ENCODE measurements at regions of chr12 and their contacts with region 1.

Region 1: DNA sequence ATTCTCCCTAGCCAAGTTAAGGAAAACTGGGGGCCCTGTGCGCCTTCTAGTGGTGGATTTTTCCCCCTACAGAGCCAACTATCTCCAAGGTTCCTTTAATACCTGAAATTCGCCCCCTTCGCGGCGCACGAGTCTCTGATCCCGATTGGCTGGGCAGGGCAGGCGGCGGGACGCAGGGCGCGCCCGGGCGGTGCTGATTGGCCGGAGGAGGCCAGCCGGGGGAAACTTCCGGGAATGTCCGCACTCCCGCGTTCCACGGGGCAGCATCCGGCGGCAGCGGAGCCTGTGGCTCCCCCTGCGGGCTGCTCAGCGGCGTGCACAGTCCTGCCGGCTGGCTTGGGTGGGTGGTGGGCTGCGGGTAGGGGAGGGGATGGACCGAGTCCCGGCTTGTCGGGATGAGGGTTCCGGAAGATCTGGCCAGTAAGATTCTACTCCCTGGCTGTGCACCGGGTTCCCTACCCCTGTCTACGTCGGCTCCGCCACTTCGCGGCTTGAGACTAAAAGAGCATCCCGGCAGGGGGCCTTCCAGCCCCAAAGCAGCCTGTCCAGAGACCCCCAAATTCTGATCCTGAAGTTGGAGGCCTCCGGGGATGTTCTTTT is at the start of gene NABP2:
- DNase-seq: peak; percentile 99
- ATAC-seq: peak; percentile 78
- H3K4me3 Mint-ChIP-seq: peak within 1 kb of the TSS; percentile 98
- H3K27ac Mint-ChIP-seq: peak within 1 kb of the TSS; percentile 97
- H3K4me1 Mint-ChIP-seq: peaks cover 33% of the 10 kb centered on the region
- H3K27me3 Mint-ChIP-seq: no peaks in the 10 kb centered on the region
- CTCF ChIP-seq: peak; percentile 54; the same call in 1 of the 2 replicates
- total RNA-seq, gene NABP2: 42.7 to 47.9 TPM (median 47.5 TPM) in 3 replicates

Region 2: DNA sequence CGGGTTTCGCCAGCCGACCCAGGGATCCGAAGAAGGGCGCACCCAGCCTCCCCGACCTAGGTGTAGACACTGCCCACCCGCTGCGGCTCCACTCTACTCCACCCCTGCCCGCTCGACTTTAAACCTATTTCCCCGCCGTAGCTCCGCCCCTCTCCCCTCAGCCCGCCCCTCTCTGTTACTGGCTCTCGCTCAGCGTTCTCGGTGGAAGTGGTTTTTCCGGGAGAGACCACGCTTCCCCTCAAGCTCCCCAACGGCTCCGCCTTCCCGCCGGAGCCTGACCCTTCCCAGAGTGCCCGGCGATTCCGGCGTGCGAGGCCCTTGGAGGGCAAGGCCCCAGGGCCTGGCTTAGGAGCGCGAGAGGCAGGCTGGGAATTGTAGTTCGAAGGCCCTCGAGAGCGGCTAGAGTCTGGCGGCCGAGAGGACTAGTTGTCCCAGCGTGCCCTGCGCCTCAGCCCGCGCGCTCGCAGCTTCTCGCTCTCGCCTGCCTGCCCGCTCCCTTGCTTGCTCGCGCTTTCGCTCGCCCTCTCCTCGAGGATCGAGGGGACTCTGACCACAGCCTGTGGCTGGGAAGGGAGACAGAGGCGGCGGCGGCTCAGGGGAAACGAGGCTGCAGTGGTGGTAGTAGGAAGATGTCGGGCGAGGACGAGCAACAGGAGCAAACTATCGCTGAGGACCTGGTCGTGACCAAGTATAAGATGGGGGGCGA is 119.9 kb before region 1 on chr12 and contains the start of gene PA2G4:
- CTCF ChIA-PET with region 1: interaction called, 6 read pairs
- POLR2A ChIA-PET with region 1: interaction called, 10 read pairs
- DNase-seq: peak; percentile 98
- ATAC-seq: peak; percentile 98
- H3K4me3 Mint-ChIP-seq: peak within 1 kb of the TSS; percentile 90
- H3K27ac Mint-ChIP-seq: peak within 1 kb of the TSS; percentile 99
- H3K4me1 Mint-ChIP-seq: peaks cover 24% of the 10 kb centered on the region
- H3K27me3 Mint-ChIP-seq: no peaks in the 10 kb centered on the region
- CTCF ChIP-seq: no peak
- total RNA-seq, gene PA2G4: 198 to 249 TPM (median 199 TPM) in 3 replicates

Region 3: GRCh38 chr12:56127888-56128669 is 96.1 kb before region 1 on chr12 and contains the start of gene ESYT1:
- CTCF ChIA-PET with region 1: interaction called, 13 read pairs
- POLR2A ChIA-PET with region 1: interaction called, 17 read pairs
- DNase-seq: peak; percentile 99
- ATAC-seq: peak; percentile 95
- H3K4me3 Mint-ChIP-seq: peak within 1 kb of the TSS; percentile 98
- H3K27ac Mint-ChIP-seq: peak within 1 kb of the TSS; percentile 99
- H3K4me1 Mint-ChIP-seq: peaks cover 30% of the 10 kb centered on the region
- H3K27me3 Mint-ChIP-seq: no peaks in the 10 kb centered on the region; the same call in 1 of the 2 replicates
- CTCF ChIP-seq: no peak
- total RNA-seq, gene ESYT1: 77.7 to 80.8 TPM (median 80.1 TPM) in 3 replicates

Region 4: DNA sequence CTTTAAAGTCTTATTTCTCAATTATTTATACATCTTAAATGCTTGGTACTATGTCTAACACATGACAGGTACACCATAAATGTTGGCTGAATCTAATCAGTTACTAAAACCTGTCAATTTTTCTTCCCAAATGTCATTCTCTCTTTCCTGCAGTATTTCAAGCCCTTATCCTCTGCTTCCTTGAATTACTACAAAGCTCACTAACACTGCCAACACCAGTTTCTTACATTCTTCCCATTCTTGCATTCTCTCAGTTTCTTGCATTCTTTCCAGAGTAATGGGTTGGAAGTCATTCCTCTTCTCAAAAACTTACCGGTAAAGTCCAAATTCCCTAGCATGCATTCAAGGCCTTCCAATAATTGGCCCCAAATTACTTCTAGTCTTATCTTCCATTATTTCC is 25.4 kb before region 1 on chr12:
- CTCF ChIA-PET with region 1: interaction called, 102 read pairs
- POLR2A ChIA-PET with region 1: interaction called, 10 read pairs
- DNase-seq: no peak
- ATAC-seq: peak; percentile 58
- H3K4me3 Mint-ChIP-seq: no peak overlapping the region
- H3K27ac Mint-ChIP-seq: peak overlapping the region; percentile 64
- H3K4me1 Mint-ChIP-seq: peaks cover 20% of the 10 kb centered on the region
- H3K27me3 Mint-ChIP-seq: no peaks in the 10 kb centered on the region
- CTCF ChIP-seq: no peak

Region 5: DNA sequence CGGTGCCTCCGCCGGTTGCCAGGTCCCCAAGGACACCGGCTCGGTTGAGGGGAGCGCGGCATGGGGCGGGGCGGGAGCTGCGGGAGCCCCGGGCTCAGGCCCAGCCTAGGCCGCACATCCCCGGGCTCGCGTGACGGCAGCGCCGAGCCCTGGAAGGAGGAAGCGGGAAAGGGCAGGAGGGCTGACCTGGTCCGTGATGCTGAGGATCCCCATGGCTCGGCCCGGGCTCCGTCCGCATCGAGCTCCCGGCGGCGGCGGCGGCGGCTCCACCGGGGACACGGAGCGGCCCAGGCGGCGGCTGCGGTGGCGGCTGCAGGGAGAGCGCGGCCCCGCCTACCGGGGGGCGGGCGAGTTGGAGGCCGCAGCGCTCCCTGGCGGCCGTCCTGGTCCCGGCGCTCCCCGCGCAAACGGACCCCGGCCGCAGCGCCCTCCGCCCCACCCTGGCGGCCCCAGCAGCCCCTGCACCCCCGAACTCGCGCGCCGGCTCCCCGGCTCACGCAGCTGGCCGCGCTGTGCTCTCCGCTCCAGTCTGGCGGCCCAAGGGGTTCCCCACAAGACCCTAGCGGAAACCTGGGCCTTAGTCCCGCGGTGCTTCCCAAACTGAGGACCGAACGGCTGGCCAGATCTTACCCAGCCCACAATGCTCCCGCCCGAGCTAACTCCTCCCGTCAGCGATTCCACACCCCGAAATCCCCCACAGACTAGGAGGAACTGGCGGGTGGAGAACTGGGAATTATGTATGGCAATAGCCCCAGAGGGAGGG is 34.0 kb after region 1 on chr12 and contains the start of gene ANKRD52:
- CTCF ChIA-PET with region 1: interaction called, 35 read pairs
- POLR2A ChIA-PET with region 1: interaction called, 16 read pairs
- DNase-seq: peak; percentile 76
- ATAC-seq: peak; percentile 74
- H3K4me3 Mint-ChIP-seq: peak within 1 kb of the TSS; percentile 95
- H3K27ac Mint-ChIP-seq: peak within 1 kb of the TSS; percentile 92
- H3K4me1 Mint-ChIP-seq: peaks cover 18% of the 10 kb centered on the region
- H3K27me3 Mint-ChIP-seq: 0 out of 2 replicates have a peak, but pooled peaks cover 4% of the 10 kb centered on the region
- CTCF ChIP-seq: peak; percentile 61
- total RNA-seq, gene ANKRD52: 33.0 to 41.2 TPM (median 38.6 TPM) in 3 replicates

Region 6: DNA sequence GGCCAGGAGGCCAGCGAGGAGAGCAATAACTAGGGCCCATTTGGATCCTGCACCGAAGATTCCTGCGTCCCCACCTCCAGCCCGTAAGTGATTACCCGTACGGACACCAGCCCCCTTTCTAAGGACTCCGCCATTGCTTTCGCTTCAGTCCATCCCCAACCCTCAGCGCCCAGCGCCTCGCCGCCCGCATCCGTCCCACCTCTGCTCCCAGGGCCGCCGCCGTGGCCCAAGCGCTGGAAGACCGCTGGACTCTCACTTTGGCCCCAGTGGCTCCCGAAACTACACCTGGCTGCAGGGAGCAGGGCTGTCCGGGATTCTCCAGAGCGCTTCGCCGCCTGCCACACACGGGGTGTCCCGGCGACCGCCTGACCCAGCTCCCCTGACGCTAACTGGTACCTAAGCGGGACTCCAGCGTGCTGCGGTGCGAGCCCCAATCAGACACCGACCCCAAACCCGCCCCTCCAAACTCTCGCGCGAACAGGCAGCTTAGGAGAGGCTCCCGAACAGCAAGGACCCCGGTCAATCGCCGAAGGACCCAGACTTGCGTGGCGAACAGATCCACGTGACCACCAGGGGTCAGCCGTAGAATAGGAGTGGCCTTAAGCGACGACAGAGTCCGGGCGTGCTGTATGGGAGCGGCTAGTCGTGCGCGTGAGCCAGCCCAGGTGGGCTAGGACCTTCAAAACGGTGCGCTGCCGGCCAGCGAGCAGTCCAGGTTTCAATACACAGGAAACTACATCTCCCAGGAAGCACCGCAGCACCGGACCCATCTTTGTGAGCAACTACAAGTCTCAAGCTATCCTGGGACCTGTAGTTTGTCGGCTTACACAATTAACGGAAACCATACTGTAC is 91.6 kb after region 1 on chr12 and contains the start of gene CNPY2:
- CTCF ChIA-PET with region 1: interaction called, 10 read pairs
- POLR2A ChIA-PET with region 1: interaction called, 4 read pairs
- DNase-seq: peak; percentile 97
- ATAC-seq: peak; percentile 94
- H3K4me3 Mint-ChIP-seq: peak within 1 kb of the TSS; percentile 98
- H3K27ac Mint-ChIP-seq: peak within 1 kb of the TSS; percentile 99
- H3K4me1 Mint-ChIP-seq: peaks cover 8% of the 10 kb centered on the region
- H3K27me3 Mint-ChIP-seq: no peaks in the 10 kb centered on the region
- CTCF ChIP-seq: no peak
- total RNA-seq, gene CNPY2: 171 to 193 TPM (median 192 TPM) in 3 replicates

Region 7: DNA sequence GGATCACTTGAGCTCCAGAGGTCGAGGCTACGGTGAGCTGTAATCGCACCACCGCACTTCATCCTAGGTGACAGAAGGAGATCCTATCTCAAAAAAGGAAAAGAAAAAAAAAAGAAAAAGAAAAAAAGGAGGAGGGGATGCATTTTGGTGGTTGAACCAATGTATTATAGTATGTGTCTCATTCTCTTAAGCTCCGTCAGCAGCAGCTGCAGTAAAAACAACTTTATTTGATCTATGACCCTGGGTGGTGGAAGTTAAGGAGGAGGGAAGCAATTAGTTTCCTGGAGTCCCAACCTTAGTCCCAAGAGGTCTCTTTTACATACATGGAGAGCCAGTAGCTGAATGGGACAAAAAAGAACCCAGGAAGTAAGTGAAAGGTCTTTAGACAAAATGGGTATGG is 165.2 kb after region 1 on chr12:
- CTCF ChIA-PET with region 1: no interaction called
- POLR2A ChIA-PET with region 1: interaction called, 12 read pairs
- DNase-seq: no peak
- ATAC-seq: no peak
- H3K4me3 Mint-ChIP-seq: no peak overlapping the region
- H3K27ac Mint-ChIP-seq: no peak overlapping the region
- H3K4me1 Mint-ChIP-seq: peaks cover 13% of the 10 kb centered on the region
- H3K27me3 Mint-ChIP-seq: peaks cover 5% of the 10 kb centered on the region; the same call in 1 of the 2 replicates
- CTCF ChIP-seq: no peak

Measured in WTC11 (cell line).